ENCODE measurements at regions of chr6 and their contacts with region 1.

Region 1: DNA sequence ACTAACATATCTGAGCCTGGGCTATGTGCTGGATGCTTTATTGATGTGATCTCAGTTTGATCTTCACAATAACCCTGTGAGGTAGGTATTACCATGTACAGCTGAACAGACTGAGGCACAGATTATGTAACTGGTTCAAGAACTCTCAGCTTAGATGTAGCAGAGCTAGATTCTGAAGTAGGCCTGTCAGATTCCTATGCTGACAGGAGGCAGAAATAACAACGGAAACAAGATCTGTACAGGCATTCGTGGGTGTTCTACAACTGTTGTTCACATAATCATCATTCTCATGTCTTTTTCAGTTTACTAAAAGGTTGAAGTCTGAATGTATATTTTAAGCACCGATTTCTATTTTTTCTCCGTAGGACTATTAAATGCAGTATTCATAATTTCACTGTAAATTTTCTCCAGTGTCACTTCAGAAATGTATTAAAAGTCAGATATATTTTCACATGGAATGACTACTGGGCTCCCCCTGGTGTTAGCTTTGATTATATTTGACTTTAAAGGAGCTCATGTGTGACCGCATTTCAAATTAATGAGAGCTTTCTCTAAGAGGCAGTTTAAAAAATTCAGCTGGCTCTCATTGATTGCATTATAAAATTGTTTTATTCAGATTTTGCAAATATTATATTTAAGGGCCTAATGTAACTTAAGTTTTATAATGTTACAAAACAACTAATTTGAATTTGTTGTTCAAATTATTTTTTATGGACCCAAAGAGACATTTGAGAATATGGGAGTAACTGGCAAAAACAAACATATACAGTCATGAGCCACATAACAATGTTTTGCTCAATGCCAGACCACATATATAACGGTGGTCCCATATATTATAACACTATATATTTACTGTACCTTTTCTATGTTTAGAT is 36.4 kb upstream of the SLC17A4 start:
- DNase-seq: no peak
- ATAC-seq: no peak
- H3K4me3 ChIP-seq: no peak overlapping the region
- H3K27ac ChIP-seq: no peak overlapping the region
- H3K4me1 ChIP-seq: no peaks in the 10 kb centered on the region
- H3K27me3 ChIP-seq: no peaks in the 10 kb centered on the region

Region 2: GRCh38 chr6:25223490-25223991 is 494.6 kb before region 1 on chr6:
- intact Hi-C with region 1: loop called in 2 of 4 experiments (anchors 5 kb)
- DNase-seq: peak; percentile 75 to 80 (median 75)
- ATAC-seq: peak; percentile 69 to 76
- H3K4me3 ChIP-seq: peak overlapping the region; percentile 23
- H3K27ac ChIP-seq: no peak overlapping the region
- H3K4me1 ChIP-seq: no peaks in the 10 kb centered on the region
- H3K27me3 ChIP-seq: no peaks in the 10 kb centered on the region

Region 3: GRCh38 chr6:25229671-25230321 is 488.3 kb before region 1 on chr6:
- intact Hi-C with region 1: loop called in 2 of 4 experiments (anchors 5 kb)
- DNase-seq: no peak
- ATAC-seq: no peak
- H3K4me3 ChIP-seq: no peak overlapping the region
- H3K27ac ChIP-seq: no peak overlapping the region
- H3K4me1 ChIP-seq: no peaks in the 10 kb centered on the region
- H3K27me3 ChIP-seq: no peaks in the 10 kb centered on the region

Region 4: DNA sequence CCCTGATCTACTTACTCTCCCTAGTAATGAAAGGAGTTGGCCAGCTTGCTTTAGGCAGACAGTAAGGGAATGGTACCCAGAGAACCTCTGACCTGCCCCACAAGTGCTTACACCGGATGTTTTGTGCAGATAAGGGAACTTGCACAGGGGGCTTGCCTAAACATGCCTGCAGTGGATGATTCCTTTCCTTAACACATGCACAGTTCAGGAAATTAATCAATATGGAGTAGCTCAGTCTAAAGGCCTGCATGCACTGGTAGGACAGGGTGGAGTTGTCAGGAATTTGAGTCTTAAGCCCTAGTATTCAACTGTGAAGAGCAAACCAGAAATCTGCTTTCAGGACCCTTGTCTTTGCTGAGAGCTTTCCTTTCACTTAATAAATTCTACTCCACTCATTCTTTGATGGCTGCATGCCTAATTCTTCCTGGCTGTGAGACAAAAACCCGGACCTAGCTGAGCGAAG is 240.6 kb after region 1 on chr6:
- intact Hi-C with region 1: no loop called
- DNase-seq: no peak
- ATAC-seq: no peak
- H3K4me3 ChIP-seq: no peak overlapping the region
- H3K27ac ChIP-seq: no peak overlapping the region
- H3K4me1 ChIP-seq: no peaks in the 10 kb centered on the region
- H3K27me3 ChIP-seq: no peaks in the 10 kb centered on the region